ENCODE measurements at regions of chr13 and their contacts with region 1.

Region 1: DNA sequence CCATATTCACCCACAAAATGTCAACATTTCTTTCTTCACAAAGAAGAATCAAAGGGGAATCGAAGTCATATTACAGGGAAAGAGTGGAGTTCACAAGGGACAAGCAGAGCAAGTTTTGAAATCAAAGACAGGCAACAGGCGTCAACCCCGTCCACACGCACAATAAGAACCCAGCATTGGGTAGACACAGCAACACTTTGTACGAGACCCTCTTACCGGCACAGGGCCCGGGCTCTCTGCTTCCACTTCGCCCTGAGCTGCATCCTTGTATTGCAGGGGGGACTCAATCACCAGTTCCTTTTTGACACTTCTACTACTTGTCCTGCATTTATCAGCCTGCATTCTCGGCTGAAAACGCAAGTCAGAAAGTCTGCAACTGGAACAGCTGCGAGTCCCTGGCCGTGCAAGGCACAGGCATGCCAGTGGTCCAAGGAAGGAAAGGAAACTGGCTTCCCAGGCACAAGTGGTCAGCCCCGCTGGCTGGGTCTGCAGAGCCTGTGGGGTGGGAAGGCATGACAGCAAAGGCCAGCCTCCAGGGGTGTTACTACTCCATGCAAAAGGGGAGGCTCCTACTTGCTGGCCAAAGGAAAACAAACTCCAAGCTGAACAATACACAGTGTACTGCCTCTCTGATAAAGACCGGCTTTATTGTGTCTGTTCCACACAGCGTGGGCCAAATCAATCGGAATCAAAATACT is at the start of gene DOCK9:
- DNase-seq: peak; percentile 76
- H3K4me3 ChIP-seq: peak within 1 kb of the TSS; percentile 38 to 50 (median 41)
- H3K27ac ChIP-seq: peak within 1 kb of the TSS; percentile 92
- H3K4me1 ChIP-seq: peaks cover 50% of the 10 kb centered on the region
- H3K27me3 ChIP-seq: no peaks in the 10 kb centered on the region
- CTCF ChIP-seq: no peak
- total RNA-seq, gene DOCK9: 65.2 to 77.6 TPM

Region 2: DNA sequence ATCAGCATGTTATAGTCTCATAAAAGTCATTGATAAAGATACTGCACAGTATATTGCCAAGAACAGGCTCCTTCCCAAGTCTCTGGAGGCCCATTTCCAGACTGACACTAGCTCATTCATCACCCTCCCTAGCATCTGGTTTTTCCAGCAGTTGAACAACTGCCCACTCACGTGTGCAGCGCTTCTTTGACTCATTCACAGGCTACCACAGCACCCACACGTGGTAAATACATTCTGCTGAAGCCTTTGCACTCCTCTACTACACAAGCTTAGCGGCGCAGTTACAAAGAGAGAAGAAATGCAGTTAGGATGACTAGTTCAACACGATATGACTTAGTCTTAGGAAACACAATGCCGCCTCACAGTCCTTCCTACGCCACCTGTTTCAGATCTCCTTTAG is 87.5 kb before region 1 on chr13:
- CTCF ChIA-PET with region 1: no interaction called
- dilution Hi-C with region 1: no loop called
- in situ Hi-C with region 1: no loop called
- intact Hi-C with region 1: loop called (anchors 5 kb)
- DNase-seq: peak; percentile 86
- H3K4me3 ChIP-seq: no peak overlapping the region
- H3K27ac ChIP-seq: peak overlapping the region; percentile 43
- H3K4me1 ChIP-seq: peaks cover 21% of the 10 kb centered on the region
- H3K27me3 ChIP-seq: no peaks in the 10 kb centered on the region
- CTCF ChIP-seq: no peak

Region 3: DNA sequence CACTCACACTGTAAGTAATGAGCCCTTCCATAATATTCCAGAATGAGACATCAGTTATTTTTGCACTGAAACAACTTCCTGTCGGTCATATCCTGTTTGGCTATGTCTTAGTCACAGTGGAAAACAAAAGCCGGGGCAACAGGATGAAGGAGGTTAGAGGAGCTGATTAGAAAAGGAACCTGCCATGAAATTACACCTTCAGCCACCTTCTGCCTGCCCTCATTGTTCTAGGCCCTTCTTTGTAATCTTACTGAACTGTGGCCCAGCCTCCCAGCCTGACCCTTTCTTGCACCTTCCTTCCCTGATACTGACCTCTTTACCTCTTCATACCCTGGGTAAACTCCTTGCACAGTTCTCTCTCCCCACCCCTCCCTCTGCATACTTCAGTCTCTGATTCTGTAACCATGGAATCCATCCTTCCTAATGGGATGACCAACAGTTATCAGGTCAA is 67.2 kb before region 1 on chr13:
- CTCF ChIA-PET with region 1: no interaction called
- dilution Hi-C with region 1: no loop called
- in situ Hi-C with region 1: no loop called
- intact Hi-C with region 1: loop called (anchors 5 kb)
- DNase-seq: peak; percentile 86
- H3K4me3 ChIP-seq: no peak overlapping the region
- H3K27ac ChIP-seq: peak overlapping the region; percentile 93
- H3K4me1 ChIP-seq: peaks cover 26% of the 10 kb centered on the region
- H3K27me3 ChIP-seq: no peaks in the 10 kb centered on the region
- CTCF ChIP-seq: no peak

Region 4: DNA sequence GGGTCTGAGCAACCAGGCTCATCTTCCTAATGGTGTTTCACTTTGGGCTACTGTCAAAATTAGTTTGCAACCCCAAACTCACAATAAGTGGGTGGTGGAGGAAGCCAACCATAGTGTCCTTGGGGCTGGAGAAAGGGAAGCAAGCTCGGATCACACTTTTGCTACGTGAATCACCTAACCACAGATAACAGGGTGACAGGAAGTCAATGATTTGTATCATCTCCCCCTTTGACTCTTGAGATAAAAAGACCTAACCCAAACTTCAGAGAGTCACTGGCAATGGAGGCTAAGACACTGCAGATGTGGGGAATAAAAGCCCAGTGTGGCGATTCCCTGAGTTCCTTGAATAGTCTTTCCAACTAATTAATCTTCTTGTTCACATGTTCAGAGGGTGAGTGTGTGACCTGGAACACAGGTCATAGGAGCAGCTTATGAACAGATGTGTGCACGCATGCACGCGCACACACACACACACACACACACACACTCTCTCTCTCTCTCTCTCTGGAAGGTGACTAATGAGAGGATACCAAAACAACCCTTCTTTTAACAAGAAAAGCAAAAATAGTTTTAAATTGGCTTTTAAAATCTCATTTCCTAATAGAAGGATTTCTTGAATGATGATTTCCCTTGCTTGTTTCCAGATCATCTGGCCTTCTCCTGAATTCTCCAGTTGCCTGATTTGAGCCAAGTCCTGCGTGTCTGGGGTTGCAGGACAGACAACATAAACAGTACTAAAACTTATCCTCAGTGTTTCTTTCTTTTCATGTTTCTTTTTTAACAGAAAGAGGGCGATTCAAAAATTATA is 21.3 kb after region 1 on chr13:
- CTCF ChIA-PET with region 1: no interaction called
- dilution Hi-C with region 1: no loop called
- in situ Hi-C with region 1: no loop called
- intact Hi-C with region 1: loop called (anchors 2 kb)
- DNase-seq: no peak
- H3K4me3 ChIP-seq: no peak overlapping the region
- H3K27ac ChIP-seq: no peak overlapping the region
- H3K4me1 ChIP-seq: peaks cover 23% of the 10 kb centered on the region
- H3K27me3 ChIP-seq: no peaks in the 10 kb centered on the region
- CTCF ChIP-seq: no peak

Region 5: DNA sequence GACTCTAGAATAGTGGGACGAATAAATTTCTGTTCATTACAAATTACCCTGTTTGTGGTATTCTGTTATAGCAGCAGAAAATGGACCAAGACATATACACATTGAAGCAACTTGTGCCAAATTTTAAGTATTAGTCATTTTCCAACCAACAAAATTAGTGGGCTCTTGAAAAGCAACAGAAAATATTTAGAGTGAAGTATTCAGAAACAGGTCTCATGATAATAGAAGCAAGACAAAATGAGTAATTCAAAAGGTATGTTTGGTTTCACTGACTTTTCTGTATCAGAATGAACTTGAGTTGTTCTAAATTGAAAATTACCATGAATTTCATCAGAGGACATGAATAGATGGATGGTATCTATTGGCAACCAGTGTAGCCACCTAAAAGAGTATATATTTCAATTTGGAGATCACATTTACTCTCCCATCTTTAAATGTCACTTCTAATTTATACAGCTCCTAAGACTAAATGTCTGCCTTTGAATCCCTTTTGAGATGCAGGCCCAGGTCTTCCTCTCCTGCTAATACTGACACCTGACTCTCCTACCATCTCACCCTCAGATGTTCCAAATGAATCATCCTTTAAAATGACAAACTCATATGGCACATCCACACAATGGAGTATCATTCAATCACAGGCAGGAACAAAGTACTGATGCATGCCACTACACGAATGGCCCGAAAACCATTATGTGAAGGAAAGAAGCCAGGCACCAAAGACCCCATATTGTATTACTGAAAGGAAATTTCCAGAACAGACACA is 40.9 kb after region 1 on chr13:
- CTCF ChIA-PET with region 1: no interaction called
- dilution Hi-C with region 1: no loop called
- in situ Hi-C with region 1: no loop called
- intact Hi-C with region 1: loop called (anchors 1 kb)
- DNase-seq: peak; percentile 59
- H3K4me3 ChIP-seq: no peak overlapping the region
- H3K27ac ChIP-seq: peak overlapping the region; percentile 22
- H3K4me1 ChIP-seq: peaks cover 21% of the 10 kb centered on the region
- H3K27me3 ChIP-seq: no peaks in the 10 kb centered on the region
- CTCF ChIP-seq: no peak

Region 6: GRCh38 chr13:99033814-99034213 is 56.1 kb after region 1 on chr13:
- CTCF ChIA-PET with region 1: no interaction called
- dilution Hi-C with region 1: no loop called
- in situ Hi-C with region 1: no loop called
- intact Hi-C with region 1: loop called (anchors 1 kb)
- DNase-seq: peak; percentile 16
- H3K4me3 ChIP-seq: no peak overlapping the region
- H3K27ac ChIP-seq: no peak overlapping the region
- H3K4me1 ChIP-seq: peaks cover 17% of the 10 kb centered on the region
- H3K27me3 ChIP-seq: no peaks in the 10 kb centered on the region
- CTCF ChIP-seq: peak; percentile 60 to 66

Region 7: GRCh38 chr13:99269627-99270241 is 292.0 kb after region 1 on chr13:
- CTCF ChIA-PET with region 1: interaction called, 3 read pairs
- dilution Hi-C with region 1: no loop called
- in situ Hi-C with region 1: no loop called
- intact Hi-C with region 1: loop called (anchors 10 kb)
- DNase-seq: peak; percentile 35
- H3K4me3 ChIP-seq: no peak overlapping the region
- H3K27ac ChIP-seq: no peak overlapping the region
- H3K4me1 ChIP-seq: peaks cover under 1% of the 10 kb centered on the region
- H3K27me3 ChIP-seq: no peaks in the 10 kb centered on the region
- CTCF ChIP-seq: peak; percentile 64 to 70

Region 8: GRCh38 chr13:99288089-99288488 is 310.4 kb after region 1 on chr13:
- CTCF ChIA-PET with region 1: no interaction called
- dilution Hi-C with region 1: no loop called
- in situ Hi-C with region 1: no loop called
- intact Hi-C with region 1: no loop called
- DNase-seq: no peak
- H3K4me3 ChIP-seq: no peak overlapping the region
- H3K27ac ChIP-seq: no peak overlapping the region
- H3K4me1 ChIP-seq: no peaks in the 10 kb centered on the region
- H3K27me3 ChIP-seq: no peaks in the 10 kb centered on the region
- CTCF ChIP-seq: no peak

Measured in mammary epithelial cell (primary cell).